AG04449 (cell line): ENCODE measurements at regions of chr6 and their contacts with region 1.

Region 1: DNA sequence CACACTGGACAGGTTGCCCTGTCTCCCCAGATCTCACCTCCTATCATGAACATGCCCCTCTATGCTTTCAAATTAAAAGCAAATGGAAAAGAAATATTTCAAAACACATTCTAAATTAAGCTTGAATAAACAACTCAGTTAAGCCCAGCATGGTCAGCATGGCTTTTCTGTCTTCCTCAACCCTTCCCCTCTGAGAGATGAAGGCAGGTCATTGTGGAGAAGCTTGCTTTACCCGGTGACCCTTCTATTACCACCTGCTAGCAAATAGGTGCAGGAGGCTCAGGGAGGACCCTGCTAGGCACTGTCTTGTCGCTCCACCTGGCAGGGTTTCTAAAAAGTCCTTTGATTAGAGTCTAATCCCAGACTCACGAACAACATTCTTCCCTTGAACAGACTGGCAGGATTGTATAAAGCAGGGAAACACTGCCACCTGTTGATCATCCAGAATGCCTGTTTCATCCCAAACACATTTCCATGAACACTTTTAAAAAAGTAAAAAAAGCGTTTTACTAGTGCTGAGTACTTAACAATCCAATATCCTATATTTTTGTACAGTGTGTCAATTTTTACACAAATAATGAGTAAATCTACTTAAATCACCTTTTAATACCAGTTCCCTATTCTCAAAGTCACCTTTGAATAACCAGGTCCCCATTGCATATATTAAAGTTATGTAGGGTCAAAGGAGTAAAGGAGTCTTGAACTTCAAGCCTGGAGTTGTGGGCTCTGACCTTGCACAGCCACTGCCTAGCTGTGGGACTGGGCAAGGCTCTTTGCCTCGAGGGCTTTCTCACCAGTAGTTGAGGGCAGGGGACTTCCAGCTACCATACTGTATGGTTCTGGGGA is 75.5 kb downstream of the GPR6 start:
- DNase-seq: peak; percentile 19
- H3K4me3 ChIP-seq: no peak overlapping the region
- CTCF ChIP-seq: peak; percentile 66

Region 2: DNA sequence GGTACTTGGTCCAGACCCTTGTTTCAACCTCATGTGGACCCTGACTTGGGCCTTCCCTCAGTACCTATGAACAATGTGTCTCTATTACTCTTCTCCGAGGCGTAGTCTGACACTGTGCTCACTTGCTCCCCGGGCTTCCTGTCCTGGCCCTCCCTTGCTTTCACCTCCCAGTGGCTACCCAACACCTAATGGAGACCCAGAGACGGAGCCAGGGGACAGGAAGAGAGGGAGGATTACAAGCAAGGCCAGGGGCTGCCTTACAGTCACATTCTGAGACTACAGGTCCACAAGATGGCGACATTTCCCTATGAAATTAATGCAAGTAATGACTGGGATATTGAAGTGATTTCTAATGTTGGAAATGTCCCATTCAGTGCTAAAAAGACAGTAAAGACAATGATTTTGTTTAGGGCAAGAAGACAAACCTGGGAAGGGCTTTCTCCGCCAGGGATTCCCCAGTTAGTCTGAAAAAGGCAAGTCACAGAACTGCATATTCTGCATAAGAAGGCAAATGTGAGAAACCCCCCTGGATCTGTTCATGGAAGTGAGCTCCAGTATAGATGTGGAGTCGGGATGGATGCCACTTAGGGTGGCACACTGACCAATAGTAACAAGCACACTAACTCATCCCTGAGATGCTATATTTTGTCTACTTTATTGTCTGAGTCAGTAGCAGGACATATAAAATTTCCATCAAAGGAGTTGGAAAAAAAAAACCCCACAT is 526.6 kb before region 1 on chr6:
- CTCF ChIA-PET with region 1: interaction called, 33 read pairs
- POLR2A ChIA-PET with region 1: no interaction called
- DNase-seq: peak; percentile 14
- H3K4me3 ChIP-seq: no peak overlapping the region
- CTCF ChIP-seq: peak; percentile 54

Region 3: GRCh38 chr6:110063594-110064263 is 10.1 kb after region 1 on chr6:
- CTCF ChIA-PET with region 1: interaction called, 14 read pairs
- POLR2A ChIA-PET with region 1: no interaction called
- DNase-seq: no peak
- H3K4me3 ChIP-seq: no peak overlapping the region
- CTCF ChIP-seq: no peak

Region 4: GRCh38 chr6:110083875-110084585 is 30.4 kb after region 1 on chr6:
- CTCF ChIA-PET with region 1: no interaction called
- POLR2A ChIA-PET with region 1: no interaction called
- DNase-seq: no peak
- H3K4me3 ChIP-seq: no peak overlapping the region
- CTCF ChIP-seq: no peak